MCF 10A (cell line): ENCODE measurements at regions of chr1 and their contacts with region 1.

Region 1: DNA sequence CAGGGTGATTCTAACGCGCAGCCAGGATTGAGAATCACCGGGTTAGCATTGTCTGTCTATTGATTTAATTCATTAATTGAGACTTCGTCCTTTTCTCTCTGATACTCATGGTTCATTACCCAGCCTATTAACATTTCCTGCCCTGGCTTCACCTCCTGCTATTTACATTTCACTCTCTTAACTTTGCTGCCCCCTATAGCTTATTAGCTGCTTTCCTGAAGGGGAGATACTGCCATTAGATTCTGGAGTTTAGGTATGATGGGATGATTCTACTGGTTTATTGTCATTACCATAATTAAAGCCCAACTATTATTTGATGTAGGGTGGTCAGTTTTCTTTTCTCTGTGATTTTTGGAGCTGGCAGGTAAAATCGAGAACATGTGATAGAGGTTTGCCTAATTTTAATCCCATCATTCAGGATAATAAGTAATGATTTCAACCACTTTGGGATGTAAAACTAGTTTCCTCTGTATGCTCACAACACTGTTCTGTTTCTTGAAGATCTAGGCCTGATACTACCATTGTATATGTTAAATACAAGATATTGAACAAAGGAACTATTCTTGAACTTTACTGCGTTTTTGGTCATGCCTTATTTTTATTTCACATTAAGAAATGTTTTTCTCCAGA is 6.4 kb downstream of the PPP2R5A start:
- DNase-seq: peak; percentile 85
- H3K4me3 Mint-ChIP-seq: no peak overlapping the region
- H3K27ac Mint-ChIP-seq: peak overlapping the region; percentile 25
- H3K4me1 Mint-ChIP-seq: peaks cover 54% of the 10 kb centered on the region
- H3K27me3 Mint-ChIP-seq: no peaks in the 10 kb centered on the region
- CTCF ChIP-seq: peak; percentile 80

Region 2: DNA sequence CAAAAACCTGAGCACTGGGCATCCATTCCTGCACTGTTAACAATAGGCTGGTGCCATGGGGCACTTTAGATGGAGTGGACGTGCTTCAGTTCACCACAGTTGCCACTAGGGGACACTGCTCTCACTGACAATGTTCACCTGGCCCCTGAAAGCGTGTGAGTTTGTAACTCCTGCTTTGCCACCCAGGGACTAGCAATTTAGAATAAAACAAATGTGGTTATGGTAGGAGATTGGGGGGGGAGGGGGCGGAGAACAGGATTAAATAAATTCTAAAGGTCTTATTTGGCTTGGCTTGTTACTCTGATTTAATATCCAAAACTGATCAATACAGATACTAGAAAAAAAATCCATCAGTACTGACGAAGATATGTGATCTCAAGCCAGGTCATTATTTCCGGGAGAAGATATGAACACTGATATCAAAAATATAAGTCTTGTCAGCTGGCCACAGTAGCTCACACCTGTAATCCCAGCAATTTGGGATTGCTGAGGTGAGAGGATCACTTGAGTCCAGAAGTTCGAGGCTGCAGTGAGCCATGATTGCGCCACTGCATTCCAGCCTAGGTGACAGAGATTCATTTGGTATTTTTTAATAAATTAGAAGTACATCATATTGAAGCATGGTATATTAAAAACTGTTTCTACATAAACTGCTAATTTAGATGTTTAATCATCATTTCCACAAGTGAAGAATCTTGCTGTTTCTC is 279.4 kb before region 1 on chr1:
- CTCF ChIA-PET with region 1: interaction called, 9 read pairs
- POLR2A ChIA-PET with region 1: no interaction called
- intact Hi-C with region 1: loop called (anchors 1 kb)
- DNase-seq: peak; percentile 95
- H3K4me3 Mint-ChIP-seq: no peak overlapping the region
- H3K27ac Mint-ChIP-seq: no peak overlapping the region
- H3K4me1 Mint-ChIP-seq: no peaks in the 10 kb centered on the region
- H3K27me3 Mint-ChIP-seq: no peaks in the 10 kb centered on the region
- CTCF ChIP-seq: peak; percentile 100

Region 3: DNA sequence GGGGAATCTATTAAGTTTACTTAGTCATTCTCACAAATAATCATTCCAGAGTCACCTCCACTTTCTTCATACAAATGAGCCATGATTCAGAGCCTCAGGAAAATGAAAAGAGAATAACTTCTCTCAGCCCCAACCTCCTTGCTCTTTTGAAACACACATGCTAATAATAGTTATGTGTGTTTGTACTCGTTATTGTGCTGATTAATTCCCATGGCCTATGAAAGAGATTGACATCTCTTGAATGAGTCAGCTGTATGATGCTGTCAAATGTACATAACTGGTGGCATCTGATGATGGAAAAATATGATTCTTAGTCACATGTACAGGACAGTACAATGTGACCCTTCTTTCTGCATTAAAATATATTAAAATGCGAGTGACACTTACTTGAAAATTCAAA is 214.6 kb before region 1 on chr1:
- CTCF ChIA-PET with region 1: interaction called, 278 read pairs
- POLR2A ChIA-PET with region 1: interaction called, 74 read pairs
- intact Hi-C with region 1: no loop called
- DNase-seq: peak; percentile 51
- H3K4me3 Mint-ChIP-seq: no peak overlapping the region
- H3K27ac Mint-ChIP-seq: peak overlapping the region; percentile 41
- H3K4me1 Mint-ChIP-seq: peaks cover 13% of the 10 kb centered on the region
- H3K27me3 Mint-ChIP-seq: no peaks in the 10 kb centered on the region
- CTCF ChIP-seq: no peak

Region 4: GRCh38 chr1:212082765-212083406 is 208.7 kb before region 1 on chr1:
- CTCF ChIA-PET with region 1: interaction called, 23 read pairs
- POLR2A ChIA-PET with region 1: interaction called, 24 read pairs
- intact Hi-C with region 1: no loop called
- DNase-seq: no peak
- H3K4me3 Mint-ChIP-seq: no peak overlapping the region
- H3K27ac Mint-ChIP-seq: no peak overlapping the region
- H3K4me1 Mint-ChIP-seq: no peaks in the 10 kb centered on the region
- H3K27me3 Mint-ChIP-seq: no peaks in the 10 kb centered on the region
- CTCF ChIP-seq: no peak

Region 5: GRCh38 chr1:212234431-212235395 is 56.9 kb before region 1 on chr1:
- CTCF ChIA-PET with region 1: interaction called, 23 read pairs
- POLR2A ChIA-PET with region 1: interaction called, 17 read pairs
- intact Hi-C with region 1: no loop called
- DNase-seq: peak; percentile 99
- H3K4me3 Mint-ChIP-seq: no peak overlapping the region
- H3K27ac Mint-ChIP-seq: peak overlapping the region; percentile 44
- H3K4me1 Mint-ChIP-seq: peaks cover 19% of the 10 kb centered on the region
- H3K27me3 Mint-ChIP-seq: no peaks in the 10 kb centered on the region
- CTCF ChIP-seq: no peak

Region 6: GRCh38 chr1:212315907-212316306 is 24.3 kb after region 1 on chr1:
- CTCF ChIA-PET with region 1: interaction called, 63 read pairs
- POLR2A ChIA-PET with region 1: interaction called, 25 read pairs
- intact Hi-C with region 1: no loop called
- DNase-seq: peak; percentile 72
- H3K4me3 Mint-ChIP-seq: no peak overlapping the region
- H3K27ac Mint-ChIP-seq: peak overlapping the region; percentile 60
- H3K4me1 Mint-ChIP-seq: peaks cover 14% of the 10 kb centered on the region
- H3K27me3 Mint-ChIP-seq: no peaks in the 10 kb centered on the region
- CTCF ChIP-seq: peak; percentile 48